ENCODE measurements at regions of chr16 and their contacts with region 1.

Region 1: GRCh38 chr16:87571136-87571867 is 31.0 kb upstream of the JPH3 start:
- DNase-seq: peak; percentile 59 to 68 (median 64)
- ATAC-seq: peak; percentile 90
- H3K4me3 ChIP-seq: no peak overlapping the region
- H3K27ac ChIP-seq: no peak overlapping the region
- H3K4me1 ChIP-seq: peaks cover 0 to 7% of the 10 kb centered on the region in 2 experiments; a peak in 4 of 5 replicates
- H3K27me3 ChIP-seq: peaks cover 26 to 78% of the 10 kb centered on the region in 2 experiments
- CTCF ChIP-seq: peak; percentile 63 to 71 (median 70)
- EP300 ChIP-seq: no peak
- POLR2A ChIP-seq: no peak
- RAD21 ChIP-seq: peak in 1 of 2 experiments; percentile 49; a peak in 2 of 4 replicates

Region 2: DNA sequence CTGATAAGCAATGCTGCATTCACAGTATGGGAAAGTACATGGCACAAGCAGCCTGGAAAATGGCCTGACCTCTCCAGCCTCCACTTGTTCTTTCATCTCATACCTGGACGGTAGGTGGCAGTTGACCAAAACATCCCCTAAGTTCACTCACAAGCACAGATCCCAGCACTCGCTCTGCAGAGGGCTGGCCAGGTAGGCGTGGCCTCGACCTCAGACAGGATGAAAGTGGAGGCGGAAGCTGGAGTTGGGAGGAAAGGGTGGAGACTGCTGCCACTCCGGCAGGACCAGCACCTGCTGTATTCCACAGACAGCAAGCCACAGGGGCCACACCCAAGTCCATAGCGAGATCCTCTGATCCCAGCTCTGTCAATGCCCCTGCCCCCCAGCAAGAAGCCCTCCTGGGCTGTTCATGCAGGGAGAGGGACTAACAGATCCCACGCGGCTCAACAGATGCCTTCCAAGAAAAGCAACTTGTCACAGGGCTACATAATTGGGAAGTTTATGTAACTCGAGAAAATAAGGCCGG is 109.8 kb before region 1 on chr16:
- CTCF ChIA-PET with region 1: interaction called, 4 read pairs
- POLR2A ChIA-PET with region 1: no interaction called
- in situ Hi-C with region 1: no loop called
- intact Hi-C with region 1: loop called (anchors 5 kb)
- DNase-seq: peak; percentile 90 to 96 (median 96)
- ATAC-seq: peak; percentile 96
- H3K4me3 ChIP-seq: peak overlapping the region; percentile 33
- H3K27ac ChIP-seq: peak overlapping the region; percentile 37
- H3K4me1 ChIP-seq: peaks cover 29% of the 10 kb centered on the region in 2 experiments
- H3K27me3 ChIP-seq: no peaks in the 10 kb centered on the region
- CTCF ChIP-seq: peak; percentile 56 to 83 (median 66)
- EP300 ChIP-seq: no peak
- POLR2A ChIP-seq: 0 out of 2 replicates have a peak, but pooled peaks have one; percentile 41
- RAD21 ChIP-seq: peak; percentile 31 to 65; a peak in 3 of 4 replicates

Region 3: GRCh38 chr16:87550496-87550961 is 20.8 kb before region 1 on chr16:
- CTCF ChIA-PET with region 1: no interaction called
- POLR2A ChIA-PET with region 1: no interaction called
- in situ Hi-C with region 1: no loop called
- intact Hi-C with region 1: loop called (anchors 1 kb)
- DNase-seq: peak; percentile 61 to 77 (median 74)
- ATAC-seq: peak; percentile 81
- H3K4me3 ChIP-seq: no peak overlapping the region
- H3K27ac ChIP-seq: no peak overlapping the region
- H3K4me1 ChIP-seq: peaks cover 0 to 18% of the 10 kb centered on the region in 2 experiments; a peak in 3 of 5 replicates
- H3K27me3 ChIP-seq: peaks cover 41 to 80% of the 10 kb centered on the region in 2 experiments
- CTCF ChIP-seq: peak; percentile 79 to 93 (median 84)
- EP300 ChIP-seq: no peak
- POLR2A ChIP-seq: no peak
- RAD21 ChIP-seq: peak; percentile 47 to 79